HAP-1 (cell line): ENCODE measurements at regions of chrX and their contacts with region 1.

Region 1: DNA sequence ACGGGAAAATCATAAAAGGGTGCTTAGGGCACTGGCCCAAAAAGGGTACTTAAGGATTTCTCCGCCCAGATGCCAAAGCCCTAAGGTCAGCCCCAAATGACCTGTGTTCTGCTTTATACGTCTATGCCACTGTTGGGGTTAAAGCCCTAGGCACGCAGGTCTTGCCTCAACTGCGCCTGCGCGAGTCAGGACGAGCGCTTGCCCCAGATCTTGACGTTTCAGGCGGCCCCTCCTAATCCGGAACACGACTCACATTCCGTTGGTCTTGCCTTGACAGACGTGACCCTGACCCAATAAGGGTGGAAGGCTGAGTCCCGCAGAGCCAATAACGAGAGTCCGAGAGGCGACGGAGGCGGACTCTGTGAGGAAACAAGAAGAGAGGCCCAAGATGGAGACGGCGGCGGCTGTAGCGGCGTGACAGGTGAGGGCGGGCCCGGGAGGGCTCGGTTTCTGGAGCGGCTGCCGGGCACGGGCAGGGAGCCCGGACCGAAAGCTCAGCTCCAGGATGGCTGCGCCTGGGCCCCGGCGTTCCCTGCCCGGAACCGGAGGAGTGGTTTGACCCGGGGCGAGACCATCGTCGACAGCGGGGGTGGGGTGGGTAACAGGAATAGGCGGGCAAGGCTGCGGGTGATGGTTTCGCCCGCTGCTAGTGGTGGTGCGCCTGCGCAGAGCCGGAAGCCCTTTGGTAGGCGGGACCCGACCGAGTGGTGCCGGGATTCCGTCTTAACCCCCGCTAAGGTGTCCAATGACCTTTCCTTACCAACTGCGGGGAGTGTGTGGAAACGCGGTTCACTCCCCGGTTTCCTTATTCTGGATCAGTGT is at the start of gene ARAF:
- DNase-seq: peak; percentile 98 to 100
- H3K4me3 ChIP-seq: peak within 1 kb of the TSS; percentile 97
- H3K4me1 ChIP-seq: peaks cover 14% of the 10 kb centered on the region
- H3K27me3 ChIP-seq: no peaks in the 10 kb centered on the region

Region 2: GRCh38 chrX:47144626-47145394 is 416.2 kb before region 1 on chrX and contains the starts of genes NDUFB11 and RBM10:
- in situ Hi-C with region 1: no loop called
- DNase-seq: peak; percentile 97 to 99
- H3K4me3 ChIP-seq: peak within 1 kb of the TSS; percentile 97
- H3K4me1 ChIP-seq: no peaks in the 10 kb centered on the region
- H3K27me3 ChIP-seq: no peaks in the 10 kb centered on the region

Region 3: GRCh38 chrX:47644557-47645091 is 83.6 kb after region 1 on chrX:
- in situ Hi-C with region 1: loop called (anchors 5 kb)
- DNase-seq: peak; percentile 20 to 49
- H3K4me3 ChIP-seq: no peak overlapping the region
- H3K4me1 ChIP-seq: peaks cover 4% of the 10 kb centered on the region
- H3K27me3 ChIP-seq: no peaks in the 10 kb centered on the region